Cardiac septum (tissue), 1 donor: ENCODE measurements at regions of chr4 and their contacts with region 1.

Region 1: DNA sequence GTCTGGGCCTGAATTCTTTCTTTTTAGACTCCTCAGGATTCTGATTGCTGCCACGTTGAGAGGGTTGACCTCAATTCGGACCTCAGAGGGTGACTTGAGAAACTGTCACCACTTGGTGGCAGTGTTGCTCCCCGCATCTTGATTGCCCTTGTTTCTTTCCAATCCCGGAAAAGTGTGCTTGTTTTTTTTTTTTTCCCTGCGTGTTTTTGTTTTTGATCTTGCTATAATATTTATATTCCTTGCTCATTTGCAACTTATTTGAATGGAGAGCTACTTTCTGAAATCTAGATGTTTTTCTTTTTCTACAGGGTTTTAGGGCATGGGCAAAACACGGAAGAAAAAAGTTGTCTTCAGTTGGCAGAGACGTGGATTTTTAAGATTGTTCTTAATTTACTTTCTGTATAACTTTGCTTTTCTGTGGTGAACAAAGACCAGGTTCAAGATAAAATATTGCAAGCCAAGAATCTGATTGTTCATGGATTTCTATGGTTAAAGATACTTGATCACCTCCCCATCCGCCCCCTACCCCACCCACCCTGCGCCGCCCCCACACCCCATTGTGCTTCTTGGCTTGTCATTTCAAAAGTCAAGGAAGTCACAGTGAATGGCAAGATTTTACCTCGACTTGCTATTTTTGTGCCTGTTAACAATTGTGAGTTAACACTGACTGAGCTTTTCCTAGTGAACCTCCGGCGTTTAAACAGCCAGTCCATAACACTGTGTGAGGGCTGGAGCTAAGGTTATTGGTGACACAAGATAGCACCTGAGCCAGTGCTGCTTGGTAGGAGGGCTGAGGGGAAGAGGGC is 102.1 kb downstream of the PTTG2 start:
- DNase-seq: no peak

Region 2: GRCh38 chr4:38030023-38030422 is 32.3 kb before region 1 on chr4:
- intact Hi-C with region 1: no loop called
- DNase-seq: no peak

Region 3: GRCh38 chr4:38730830-38731646 is 668.7 kb after region 1 on chr4:
- intact Hi-C with region 1: loop called (anchors 1 kb)
- DNase-seq: peak; percentile 94